HAP-1 (cell line): ENCODE measurements at regions of chr1 and their contacts with region 1.

Region 1: DNA sequence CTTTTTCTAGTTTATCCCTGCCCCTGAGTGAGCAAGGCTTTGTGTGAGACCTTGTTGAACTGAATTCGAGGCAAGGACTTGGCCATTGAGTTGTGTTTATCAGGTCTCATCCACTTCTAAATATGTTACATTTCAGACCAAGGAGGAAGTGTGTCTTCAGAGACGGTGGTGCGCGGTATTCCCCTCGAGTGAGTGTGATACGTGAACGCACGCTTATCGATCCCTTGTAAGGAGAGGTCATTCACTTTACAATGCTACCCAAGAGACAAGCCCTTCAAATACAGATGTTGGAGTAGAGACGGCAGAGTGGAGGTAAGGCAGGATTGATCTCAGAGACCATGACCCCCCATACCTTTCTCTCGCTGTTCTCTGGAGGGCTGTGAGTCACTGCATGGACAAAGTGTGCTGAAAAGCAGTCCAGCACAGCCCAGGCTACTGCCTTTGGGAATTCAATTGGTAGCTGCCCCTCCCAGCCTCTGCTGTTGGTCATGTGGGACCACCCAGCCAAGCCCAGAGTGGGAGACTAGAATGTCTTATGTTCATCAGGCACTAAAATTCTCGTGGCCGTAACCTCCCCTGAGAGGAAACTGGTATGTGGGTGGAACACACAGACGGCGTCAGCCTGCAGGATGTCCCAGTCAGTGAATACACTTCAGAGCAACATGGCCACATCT is 16.3 kb upstream of the MTARC1 start:
- DNase-seq: no peak
- H3K4me3 ChIP-seq: no peak overlapping the region
- H3K4me1 ChIP-seq: no peaks in the 10 kb centered on the region; the same call in 1 of the 2 replicates
- H3K27me3 ChIP-seq: no peaks in the 10 kb centered on the region

Region 2: DNA sequence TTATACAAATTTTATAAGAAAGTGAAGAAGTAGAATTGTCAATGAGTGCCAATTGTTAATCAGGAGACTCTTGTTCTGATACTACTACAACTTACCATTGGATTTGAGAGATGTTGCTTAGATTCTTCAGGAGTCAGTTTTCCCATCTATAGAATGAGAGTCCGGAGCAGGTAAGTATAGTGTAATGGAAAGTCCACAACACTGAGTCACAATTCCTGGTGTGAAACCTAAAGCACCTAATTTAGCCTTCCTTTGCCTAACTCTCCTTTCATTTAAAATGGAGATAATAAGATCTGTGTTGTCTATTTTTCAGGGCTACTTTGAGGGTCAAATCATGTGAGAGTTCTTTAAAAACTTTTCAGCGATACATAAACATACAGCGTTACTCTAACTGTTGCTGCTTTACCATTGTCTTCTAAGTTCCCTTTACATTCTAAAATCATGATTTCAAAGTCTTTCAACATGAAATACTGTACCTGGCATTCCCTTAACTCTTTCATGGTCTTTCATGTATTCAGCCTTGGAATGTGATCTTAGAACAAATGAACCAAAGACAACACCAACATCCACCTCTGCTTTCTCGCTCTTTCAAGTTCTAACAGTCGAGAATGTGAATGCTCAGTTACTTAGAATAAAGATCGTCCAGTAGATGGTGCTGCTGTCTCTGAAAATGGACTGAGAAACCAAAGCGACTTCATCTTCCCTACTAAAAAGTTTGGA is 932.9 kb before region 1 on chr1:
- in situ Hi-C with region 1: loop called (anchors 25 kb)
- DNase-seq: peak; percentile 48 to 69
- H3K4me3 ChIP-seq: no peak overlapping the region
- H3K4me1 ChIP-seq: no peaks in the 10 kb centered on the region; the same call in 1 of the 2 replicates
- H3K27me3 ChIP-seq: peaks cover 7% of the 10 kb centered on the region

Region 3: DNA sequence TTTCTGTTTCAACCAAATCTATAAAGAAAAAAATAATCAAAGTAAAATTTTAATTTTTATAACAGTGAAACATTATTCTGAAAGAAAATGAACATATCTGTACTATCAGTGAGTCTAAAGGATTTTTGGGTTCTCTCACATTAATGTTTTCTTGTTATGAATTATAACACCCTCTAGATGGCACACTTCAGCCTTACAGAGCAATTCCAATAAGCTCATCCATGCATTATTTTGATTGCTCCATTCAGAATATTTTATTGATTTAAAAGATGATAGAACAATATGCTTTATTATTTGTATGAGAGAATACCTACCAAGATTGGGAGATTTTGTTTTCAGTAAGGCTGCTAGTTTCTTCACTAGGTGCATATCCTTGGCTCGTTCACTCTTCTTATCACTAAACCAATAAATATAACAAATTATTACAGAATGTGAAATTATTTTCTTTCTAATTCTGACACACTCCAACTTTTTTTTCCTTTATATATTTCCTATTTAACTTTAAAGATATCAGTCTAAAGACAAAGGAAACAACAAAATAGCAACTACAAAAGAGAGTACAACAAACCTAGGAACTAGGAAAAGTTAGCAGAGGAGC is 580.5 kb before region 1 on chr1:
- in situ Hi-C with region 1: loop called (anchors 25 kb)
- DNase-seq: peak in 1 of 2 experiments; percentile 36
- H3K4me3 ChIP-seq: no peak overlapping the region
- H3K4me1 ChIP-seq: peaks cover 2% of the 10 kb centered on the region; the same call in 1 of the 2 replicates
- H3K27me3 ChIP-seq: no peaks in the 10 kb centered on the region

Region 4: GRCh38 chr1:220827445-220828178 is 57.2 kb after region 1 on chr1:
- in situ Hi-C with region 1: no loop called
- DNase-seq: no peak
- H3K4me3 ChIP-seq: no peak overlapping the region
- H3K4me1 ChIP-seq: no peaks in the 10 kb centered on the region
- H3K27me3 ChIP-seq: no peaks in the 10 kb centered on the region